Adrenal gland (tissue), 19 donors: ENCODE measurements at regions of chr9 and their contacts with region 1.

Region 1: DNA sequence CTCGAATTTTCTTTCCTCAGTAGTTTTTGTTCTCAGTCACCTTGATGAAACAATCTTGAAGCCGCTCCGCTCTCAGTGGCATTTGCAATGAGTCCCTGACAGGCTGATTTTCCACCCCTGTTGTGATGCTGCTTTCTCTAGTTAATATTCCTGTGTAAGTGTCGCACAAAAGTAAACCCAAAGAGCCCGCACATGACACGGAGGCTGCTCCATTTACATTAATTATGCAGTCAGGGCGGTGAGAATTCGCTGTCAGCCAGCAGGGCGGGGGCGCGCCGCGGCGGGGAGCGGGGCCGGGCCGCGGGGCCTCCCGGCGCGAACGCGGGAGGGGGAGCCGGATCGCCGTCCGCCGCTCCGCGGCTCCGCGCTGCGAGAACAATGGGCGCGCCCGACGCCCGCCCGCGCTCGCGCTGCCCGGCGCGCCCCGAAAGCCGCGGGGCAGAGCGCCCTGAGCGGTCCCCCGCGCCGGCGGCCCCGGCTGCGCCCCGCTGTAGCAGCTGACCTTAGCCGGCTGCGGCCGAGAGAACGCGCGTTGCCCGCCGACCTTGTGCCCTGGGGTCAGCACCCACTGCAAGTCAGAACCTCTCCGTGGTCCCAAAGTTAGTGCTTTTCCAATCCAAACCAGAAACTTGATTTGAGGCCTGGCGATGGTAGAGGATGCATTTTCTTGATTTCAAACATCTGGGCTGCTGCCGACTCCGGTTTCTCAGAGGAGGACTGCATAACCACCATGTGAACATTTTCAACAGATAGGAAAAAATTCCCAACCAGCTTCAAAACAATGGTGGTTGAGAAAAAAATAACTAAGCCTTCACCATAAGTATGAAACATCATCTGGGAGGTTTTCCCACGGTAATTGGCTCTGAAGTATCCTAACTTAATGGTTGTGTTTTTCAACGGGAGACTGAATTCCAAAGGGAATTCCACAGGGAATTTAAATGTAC is 142.6 kb downstream of the PBX3 start:
- DNase-seq: peak; percentile 32 to 68 (median 35)
- H3K4me3 ChIP-seq: peak overlapping the region in 2 of 4 donors; percentile 11 to 69
- H3K27ac ChIP-seq: peak overlapping the region; percentile 42 to 89 (median 73)
- H3K4me1 ChIP-seq: peaks cover 53 to 66% of the 10 kb centered on the region in 2 donors
- H3K27me3 ChIP-seq: no peaks in the 10 kb centered on the region
- CTCF ChIP-seq: no peak
- POLR2A ChIP-seq: no peak

Region 2: DNA sequence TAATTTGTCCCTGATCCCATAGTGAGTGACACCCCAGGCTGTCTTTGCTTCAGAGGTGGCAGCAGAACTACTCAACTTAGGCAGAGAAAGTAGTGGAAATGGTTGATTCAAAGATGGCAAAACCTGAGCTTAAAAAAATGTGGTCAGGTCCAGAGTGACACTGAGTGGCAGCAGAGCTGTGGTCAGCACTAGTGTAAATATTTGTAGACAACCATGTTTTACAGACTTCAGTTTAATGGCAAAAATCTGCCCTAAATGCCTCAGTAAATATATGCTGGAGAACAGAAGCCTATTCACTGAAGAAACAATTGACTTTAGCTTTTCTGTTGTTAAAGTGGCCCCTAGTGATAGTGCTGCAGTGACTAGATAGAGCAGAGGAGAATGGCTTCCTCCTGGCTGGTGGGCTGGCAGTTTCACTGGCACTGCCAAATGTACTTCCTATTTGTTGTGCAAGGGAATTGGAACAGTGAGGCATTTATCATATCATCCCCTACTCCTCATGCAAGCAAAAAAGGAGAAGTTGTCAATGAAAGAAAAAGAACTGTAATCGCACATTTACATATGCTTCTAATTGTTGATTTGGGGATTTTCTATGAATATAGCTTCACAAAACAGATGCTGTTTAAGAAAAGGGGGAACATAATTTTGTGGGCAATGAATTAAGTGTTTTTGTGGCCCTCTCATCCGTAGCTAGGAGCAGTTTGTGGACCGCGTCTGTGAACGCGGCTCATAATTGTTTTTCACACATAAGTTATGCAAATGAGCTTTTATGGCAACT is 130.6 kb before region 1 on chr9:
- intact Hi-C with region 1: loop called in 1 of 2 experiments (anchors 5 kb)
- DNase-seq: peak in 4 of 7 donors; percentile 25 to 62 (median 44)
- H3K4me3 ChIP-seq: peak overlapping the region in 1 of 4 donors; percentile 37
- H3K27ac ChIP-seq: peak overlapping the region in 2 of 5 donors; percentile 38 to 43
- H3K4me1 ChIP-seq: peaks cover 22 to 96% of the 10 kb centered on the region in 2 donors
- H3K27me3 ChIP-seq: no peaks in the 10 kb centered on the region
- CTCF ChIP-seq: no peak
- POLR2A ChIP-seq: no peak